ENCODE measurements at regions of chr19 and their contacts with region 1.

Region 1: GRCh38 chr19:53333463-53334449 is at the start of gene ZNF845:
- DNase-seq: peak; percentile 96
- H3K4me3 Mint-ChIP-seq: peak within 1 kb of the TSS; percentile 86
- H3K27ac Mint-ChIP-seq: peak within 1 kb of the TSS; percentile 84
- H3K4me1 Mint-ChIP-seq: peaks cover 7% of the 10 kb centered on the region
- H3K27me3 Mint-ChIP-seq: no peaks in the 10 kb centered on the region
- CTCF ChIP-seq: no peak
- total RNA-seq, gene ZNF845: 3.8 and 5.7 TPM in 2 replicates

Region 2: GRCh38 chr19:53195265-53195903 is 138.4 kb before region 1 on chr19:
- CTCF ChIA-PET with region 1: interaction called, 10 read pairs
- POLR2A ChIA-PET with region 1: no interaction called
- intact Hi-C with region 1: no loop called
- DNase-seq: peak; percentile 50
- H3K4me3 Mint-ChIP-seq: no peak overlapping the region
- H3K27ac Mint-ChIP-seq: no peak overlapping the region
- H3K4me1 Mint-ChIP-seq: no peaks in the 10 kb centered on the region
- H3K27me3 Mint-ChIP-seq: no peaks in the 10 kb centered on the region
- CTCF ChIP-seq: peak; percentile 69

Region 3: DNA sequence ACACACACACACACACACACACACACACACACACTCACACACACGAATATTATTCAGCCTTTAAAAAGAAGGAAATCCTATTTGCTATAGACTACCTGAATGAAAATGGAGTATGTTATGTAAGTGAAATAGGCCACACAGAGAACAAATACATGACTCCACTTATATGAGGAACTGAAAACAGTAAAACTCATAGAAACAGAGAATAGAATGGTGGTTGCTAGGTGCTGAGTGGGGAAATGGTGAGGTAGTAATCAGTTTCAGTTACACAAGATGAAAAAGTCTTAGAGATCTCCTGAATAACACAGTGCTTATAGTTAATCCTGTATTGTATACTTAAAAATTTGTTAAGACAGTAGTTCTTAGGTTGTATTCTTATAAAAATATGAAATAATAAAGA is 87.3 kb before region 1 on chr19:
- CTCF ChIA-PET with region 1: no interaction called
- POLR2A ChIA-PET with region 1: no interaction called
- intact Hi-C with region 1: no loop called
- DNase-seq: no peak
- H3K4me3 Mint-ChIP-seq: no peak overlapping the region
- H3K27ac Mint-ChIP-seq: no peak overlapping the region
- H3K4me1 Mint-ChIP-seq: no peaks in the 10 kb centered on the region
- H3K27me3 Mint-ChIP-seq: no peaks in the 10 kb centered on the region
- CTCF ChIP-seq: no peak

Region 4: DNA sequence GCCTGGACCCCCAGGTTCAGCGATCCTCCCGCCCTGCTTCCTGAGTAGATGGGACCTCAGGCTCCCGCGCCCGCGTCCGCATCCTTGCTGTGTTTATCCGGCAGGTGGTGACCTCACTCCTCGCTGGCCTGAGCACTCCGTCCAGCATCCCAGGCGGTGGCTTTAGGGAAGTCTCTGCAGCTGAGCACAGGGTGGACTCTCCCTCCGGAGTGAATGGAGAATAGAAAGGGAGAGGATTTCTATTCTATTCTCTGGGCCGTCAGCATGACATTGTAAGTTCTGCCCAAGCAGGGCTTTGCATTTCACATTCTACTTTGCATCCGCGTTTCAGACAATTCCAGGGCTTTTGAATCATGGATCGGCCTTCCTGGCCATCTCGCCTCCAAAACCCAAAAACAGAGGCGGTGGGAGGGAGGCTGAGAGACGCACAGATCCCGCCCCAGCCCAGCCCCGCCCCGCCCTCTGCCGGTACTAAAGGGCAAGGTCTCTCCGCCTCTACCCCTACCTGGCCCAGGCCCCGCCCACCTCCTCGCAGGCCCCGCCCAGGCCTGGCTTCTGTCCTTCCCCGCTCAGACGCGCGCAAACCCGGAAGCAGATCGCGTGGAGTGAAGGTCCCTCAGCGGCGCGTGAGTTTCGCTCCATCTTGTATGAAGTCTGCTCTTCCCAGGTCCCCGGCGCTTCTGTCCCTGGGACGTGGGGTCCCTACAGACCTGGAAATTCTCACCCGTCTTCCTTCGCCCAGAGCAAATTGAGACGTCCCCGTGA is 31.6 kb after region 1 on chr19 and contains the start of gene ZNF525:
- CTCF ChIA-PET with region 1: no interaction called
- POLR2A ChIA-PET with region 1: interaction called, 10 read pairs
- intact Hi-C with region 1: loop called (anchors 5 kb)
- DNase-seq: peak; percentile 90
- H3K4me3 Mint-ChIP-seq: peak within 1 kb of the TSS; percentile 88
- H3K27ac Mint-ChIP-seq: peak within 1 kb of the TSS; percentile 70
- H3K4me1 Mint-ChIP-seq: peaks cover 9% of the 10 kb centered on the region
- H3K27me3 Mint-ChIP-seq: no peaks in the 10 kb centered on the region
- CTCF ChIP-seq: peak; percentile 35
- total RNA-seq, gene ZNF525: 9.5 and 11.2 TPM in 2 replicates

Region 5: DNA sequence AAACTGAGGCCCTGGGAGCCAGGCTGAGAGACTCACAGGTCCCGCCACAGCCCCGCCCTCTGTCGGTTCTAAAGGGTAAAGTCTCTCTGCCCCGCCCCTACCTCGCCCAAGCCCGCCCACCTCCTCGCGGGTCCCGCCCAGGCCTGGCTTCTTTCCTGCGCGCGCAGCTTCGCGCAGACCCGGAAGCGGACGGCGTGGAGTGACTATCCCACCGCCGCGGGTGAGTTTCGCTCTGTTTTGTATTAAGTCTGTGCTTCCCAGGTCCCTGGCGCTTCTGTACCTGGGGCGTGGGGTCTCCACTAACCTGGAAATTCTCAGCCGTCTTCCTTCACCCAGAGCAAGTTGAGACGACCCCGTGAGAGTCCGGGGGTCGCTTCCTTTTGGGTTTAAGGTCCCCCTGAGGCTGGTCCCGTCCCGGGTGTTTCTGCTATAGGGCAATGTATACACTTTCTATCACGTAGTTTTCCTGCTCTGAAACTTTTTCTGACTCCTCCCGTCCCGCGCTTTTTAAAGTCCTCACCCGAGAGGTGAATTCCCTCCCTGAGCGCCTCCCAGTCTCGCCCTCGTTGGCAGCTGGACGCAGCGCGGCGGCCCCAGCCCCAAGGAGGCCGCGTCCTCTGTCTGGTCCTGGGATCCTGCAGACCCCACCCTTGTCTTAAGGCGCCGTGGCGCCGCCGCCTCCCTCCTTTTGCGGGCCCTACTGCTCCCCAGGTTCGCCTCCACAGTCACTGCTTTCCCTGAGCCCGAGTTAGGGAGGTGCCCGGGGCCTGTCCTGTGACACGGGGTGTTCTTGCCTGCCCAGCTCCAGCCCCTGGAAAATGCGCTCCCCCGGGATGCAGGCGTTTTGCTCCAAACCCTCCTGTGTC is 61.5 kb after region 1 on chr19 and contains the start of gene ZNF765:
- CTCF ChIA-PET with region 1: no interaction called
- POLR2A ChIA-PET with region 1: interaction called, 12 read pairs
- intact Hi-C with region 1: no loop called
- DNase-seq: peak; percentile 94
- H3K4me3 Mint-ChIP-seq: peak within 1 kb of the TSS; percentile 79
- H3K27ac Mint-ChIP-seq: peak within 1 kb of the TSS; percentile 79
- H3K4me1 Mint-ChIP-seq: peaks cover 9% of the 10 kb centered on the region
- H3K27me3 Mint-ChIP-seq: no peaks in the 10 kb centered on the region
- CTCF ChIP-seq: peak; percentile 49
- total RNA-seq, gene ZNF765: 5.0 and 5.2 TPM in 2 replicates

Measured in MCF 10A (cell line).